ENCODE measurements at regions of chr19 and their contacts with region 1.

Region 1: DNA sequence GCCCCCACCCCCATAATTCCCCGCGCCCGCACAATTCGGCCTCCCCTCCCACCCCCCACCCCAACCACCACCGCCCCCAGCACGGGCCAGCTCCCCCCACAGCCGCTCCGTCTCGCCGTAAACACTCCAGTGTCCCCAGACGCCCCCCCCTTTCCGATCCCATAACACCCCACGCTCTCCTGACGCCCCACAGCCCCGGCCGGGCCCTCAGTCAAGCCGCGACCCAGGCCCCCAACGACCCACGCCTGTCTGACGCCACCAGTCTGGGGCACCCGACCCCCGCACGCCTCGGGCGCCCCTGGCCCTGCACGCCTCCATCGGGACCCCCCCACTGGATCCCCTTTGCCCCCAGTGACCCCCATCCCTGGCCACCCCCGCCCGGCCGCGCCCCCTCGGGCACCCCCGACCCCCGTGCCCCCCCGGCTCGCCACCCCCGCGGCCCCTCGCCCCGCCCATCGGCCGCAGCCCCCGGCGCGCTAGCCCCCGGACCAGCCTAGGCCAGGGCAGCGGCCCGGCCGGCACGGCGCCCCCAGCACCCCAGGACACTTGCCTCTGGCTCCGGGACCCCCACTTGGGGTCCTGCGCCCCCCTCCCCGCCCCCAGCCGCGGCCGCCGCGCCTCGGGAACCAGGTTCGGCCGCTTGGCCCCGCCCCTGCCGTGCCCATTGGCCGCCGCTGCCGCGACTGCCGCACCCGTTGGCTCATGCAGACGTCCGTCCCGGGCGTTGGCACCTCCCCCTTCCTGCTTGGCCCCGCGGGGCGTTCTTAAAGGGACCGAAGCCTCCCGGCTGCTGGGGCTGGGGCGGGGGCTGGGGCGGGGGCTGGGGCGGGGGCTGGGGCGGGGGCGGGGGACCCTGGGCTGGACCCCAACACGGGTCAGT is at the start of gene FKBP8:
- DNase-seq: peak; percentile 97
- H3K4me3 Mint-ChIP-seq: peak within 1 kb of the TSS; percentile 89
- H3K27ac Mint-ChIP-seq: peak within 1 kb of the TSS; percentile 98
- H3K4me1 Mint-ChIP-seq: peaks cover 23% of the 10 kb centered on the region
- H3K27me3 Mint-ChIP-seq: no peaks in the 10 kb centered on the region
- total RNA-seq, gene FKBP8: 232 to 236 TPM

Region 2: DNA sequence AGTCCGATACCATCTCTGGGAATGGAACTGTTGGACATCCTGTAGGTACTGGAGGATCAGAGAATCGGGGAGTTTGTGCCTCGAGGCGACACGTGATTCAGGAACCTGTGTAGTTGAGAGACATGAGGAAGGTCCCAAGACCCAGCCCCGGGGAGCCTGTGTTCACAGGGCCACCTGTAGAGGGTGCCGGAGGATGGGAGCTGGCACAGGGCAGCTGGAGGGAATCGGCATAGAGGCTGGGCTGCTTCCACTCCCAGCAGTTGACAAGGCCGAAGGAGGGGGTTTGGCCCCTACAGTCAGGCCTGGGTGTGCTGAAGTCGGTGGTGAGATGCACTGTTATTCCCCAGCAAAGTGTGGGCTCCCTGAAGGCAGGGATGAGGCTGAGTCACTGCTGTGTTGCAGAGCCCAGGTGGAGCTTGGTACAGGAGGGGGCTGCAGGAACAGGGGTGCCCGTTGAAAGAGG is 102.7 kb before region 1 on chr19:
- CTCF ChIA-PET with region 1: no interaction called
- POLR2A ChIA-PET with region 1: no interaction called
- intact Hi-C with region 1: loop called (anchors 5 kb)
- DNase-seq: peak; percentile 66
- H3K4me3 Mint-ChIP-seq: no peak overlapping the region
- H3K27ac Mint-ChIP-seq: no peak overlapping the region
- H3K4me1 Mint-ChIP-seq: peaks cover 23% of the 10 kb centered on the region
- H3K27me3 Mint-ChIP-seq: no peaks in the 10 kb centered on the region

Region 3: GRCh38 chr19:18478569-18479311 is 64.4 kb before region 1 on chr19:
- CTCF ChIA-PET with region 1: no interaction called
- POLR2A ChIA-PET with region 1: no interaction called
- intact Hi-C with region 1: loop called (anchors 2 kb)
- DNase-seq: peak; percentile 92
- H3K4me3 Mint-ChIP-seq: peak overlapping the region; percentile 54
- H3K27ac Mint-ChIP-seq: peak overlapping the region; percentile 96
- H3K4me1 Mint-ChIP-seq: peaks cover 93% of the 10 kb centered on the region
- H3K27me3 Mint-ChIP-seq: no peaks in the 10 kb centered on the region

Region 4: GRCh38 chr19:18557474-18558201 is 14.5 kb after region 1 on chr19 and contains the start of gene KXD1:
- CTCF ChIA-PET with region 1: interaction called, 22 read pairs
- POLR2A ChIA-PET with region 1: interaction called, 14 read pairs
- intact Hi-C with region 1: loop called (anchors 1 kb)
- DNase-seq: peak; percentile 99
- H3K4me3 Mint-ChIP-seq: peak within 1 kb of the TSS; percentile 86
- H3K27ac Mint-ChIP-seq: peak within 1 kb of the TSS; percentile 94
- H3K4me1 Mint-ChIP-seq: peaks cover 13% of the 10 kb centered on the region
- H3K27me3 Mint-ChIP-seq: no peaks in the 10 kb centered on the region
- total RNA-seq, gene KXD1: 112 to 114 TPM

Region 5: GRCh38 chr19:18571564-18572300 is 28.6 kb after region 1 on chr19 and contains the start of gene UBA52:
- CTCF ChIA-PET with region 1: interaction called, 6 read pairs
- POLR2A ChIA-PET with region 1: interaction called, 14 read pairs
- intact Hi-C with region 1: loop called (anchors 1 kb)
- DNase-seq: peak; percentile 99
- H3K4me3 Mint-ChIP-seq: peak within 1 kb of the TSS; percentile 91
- H3K27ac Mint-ChIP-seq: peak within 1 kb of the TSS; percentile 92
- H3K4me1 Mint-ChIP-seq: peaks cover 23% of the 10 kb centered on the region
- H3K27me3 Mint-ChIP-seq: no peaks in the 10 kb centered on the region
- total RNA-seq, gene UBA52: 1,569 to 1,601 TPM